Activated CD4-positive, alpha-beta T cell treated with anti-CD3 and anti-CD28 coated beads for 36 hours (primary cell): ENCODE measurements at regions of chr21 and their contacts with region 1.

Region 1: DNA sequence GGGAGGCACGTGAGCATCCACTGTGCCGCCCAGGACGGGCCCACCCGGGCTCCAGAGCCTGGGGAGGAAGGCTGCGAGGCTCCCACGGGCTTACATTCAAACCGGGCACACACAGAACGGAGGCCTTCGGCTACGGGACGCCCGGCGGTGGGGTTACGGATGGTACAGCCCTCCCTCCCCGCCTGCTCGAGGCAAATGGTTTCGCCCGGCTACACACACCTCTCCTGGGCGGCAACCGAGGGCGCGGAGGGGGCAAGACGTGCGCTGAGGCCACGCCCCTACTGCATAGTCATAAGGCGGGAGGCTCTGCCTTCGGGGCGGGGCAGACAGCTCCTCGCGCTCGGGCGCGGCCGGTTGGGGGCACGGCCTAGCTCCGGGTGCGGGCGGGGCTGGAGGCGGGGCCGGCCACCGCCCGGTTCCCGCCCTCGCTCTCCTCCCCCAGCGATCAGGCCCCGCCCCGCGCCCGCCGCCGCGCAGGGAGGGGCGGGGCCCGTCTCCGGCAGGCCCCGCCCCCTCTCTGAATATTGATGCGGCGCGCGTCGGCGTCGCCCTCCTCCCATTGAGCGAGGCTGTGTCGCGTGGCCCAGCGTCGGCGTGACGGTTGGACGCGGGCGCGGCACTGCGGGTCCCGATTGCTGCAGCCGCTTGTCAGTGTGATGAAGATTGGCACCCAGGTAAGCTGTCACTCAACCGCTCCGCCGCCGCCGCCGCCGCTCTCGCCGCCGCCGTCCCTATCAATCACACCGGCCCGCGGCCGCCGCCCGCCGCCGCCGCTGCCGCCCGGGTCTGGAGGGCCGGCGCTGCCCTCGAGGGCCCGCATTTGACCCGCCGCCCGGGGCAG is at the start of gene PKNOX1:
- DNase-seq: peak; percentile 100
- ATAC-seq: peak; percentile 89
- H3K4me3 Mint-ChIP-seq: peak within 1 kb of the TSS; percentile 85
- H3K27ac Mint-ChIP-seq: peak within 1 kb of the TSS; percentile 94
- H3K4me1 Mint-ChIP-seq: peaks cover 30% of the 10 kb centered on the region
- H3K27me3 Mint-ChIP-seq: no peaks in the 10 kb centered on the region
- total RNA-seq, gene PKNOX1: 13.4 to 14.8 TPM

Region 2: GRCh38 chr21:41361786-41362604 is 1612.2 kb before region 1 on chr21 and contains the start of gene MX2:
- CTCF ChIA-PET with region 1: no interaction called
- POLR2A ChIA-PET with region 1: no interaction called
- intact Hi-C with region 1: loop called in 1 of 2 experiments (anchors 5 kb)
- DNase-seq: peak; percentile 87
- ATAC-seq: peak; percentile 79
- H3K4me3 Mint-ChIP-seq: peak within 1 kb of the TSS; percentile 77
- H3K27ac Mint-ChIP-seq: peak within 1 kb of the TSS; percentile 97
- H3K4me1 Mint-ChIP-seq: peaks cover 56% of the 10 kb centered on the region
- H3K27me3 Mint-ChIP-seq: no peaks in the 10 kb centered on the region
- total RNA-seq, gene MX2: 30.7 to 40.4 TPM

Region 3: GRCh38 chr21:42878993-42879787 is 95.0 kb before region 1 on chr21 and contains the start of gene WDR4:
- CTCF ChIA-PET with region 1: no interaction called
- POLR2A ChIA-PET with region 1: interaction called, 3 read pairs
- intact Hi-C with region 1: loop called in 1 of 2 experiments (anchors 1 kb)
- DNase-seq: peak; percentile 99
- ATAC-seq: peak; percentile 93
- H3K4me3 Mint-ChIP-seq: peak within 1 kb of the TSS; percentile 92
- H3K27ac Mint-ChIP-seq: peak within 1 kb of the TSS; percentile 99
- H3K4me1 Mint-ChIP-seq: peaks cover 17% of the 10 kb centered on the region
- H3K27me3 Mint-ChIP-seq: no peaks in the 10 kb centered on the region
- total RNA-seq, gene WDR4: 34.0 to 46.5 TPM

Region 4: DNA sequence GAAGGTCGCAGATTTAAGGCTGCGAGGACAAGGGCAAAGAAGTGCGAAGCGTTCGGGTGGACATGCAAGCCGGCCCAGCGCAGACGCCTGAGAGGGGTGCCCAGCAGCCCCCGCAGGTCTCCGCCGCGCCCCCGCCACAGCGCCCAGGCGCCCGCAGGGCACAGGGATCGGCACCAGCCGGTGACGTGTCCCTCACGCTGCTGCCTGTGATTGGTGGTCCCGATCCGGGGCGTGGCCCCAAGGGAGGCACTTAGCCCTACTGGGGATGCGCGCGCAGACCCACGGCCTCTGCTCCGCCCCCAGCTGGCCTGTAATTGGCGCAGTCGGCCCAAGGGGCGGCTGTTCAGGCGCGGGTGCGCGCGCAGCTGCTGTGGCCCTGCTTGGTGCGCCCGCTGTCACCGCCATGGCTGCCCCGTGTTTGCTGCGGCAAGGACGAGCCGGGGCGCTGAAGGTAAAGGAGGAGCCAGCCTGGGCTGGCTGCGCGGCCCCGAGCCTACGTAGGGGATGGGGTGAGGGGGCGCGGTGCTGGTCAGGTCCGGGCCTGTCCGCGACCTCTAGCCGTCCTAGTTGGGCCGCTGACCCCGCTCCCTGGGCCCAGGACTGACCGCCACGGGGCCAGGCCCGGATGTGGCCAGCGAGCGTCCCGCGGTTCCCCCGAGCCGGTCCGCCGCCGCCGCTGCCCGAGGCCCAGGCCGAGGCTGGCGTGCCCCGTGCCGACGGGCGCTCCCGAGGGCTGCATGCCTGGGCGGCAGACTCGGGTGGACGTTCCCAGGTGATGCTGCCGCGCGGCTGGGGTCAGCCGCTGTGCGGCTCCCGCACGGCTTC is 81.1 kb before region 1 on chr21 and contains the start of gene NDUFV3:
- CTCF ChIA-PET with region 1: no interaction called
- POLR2A ChIA-PET with region 1: interaction called, 4 read pairs
- intact Hi-C with region 1: loop called (anchors 1 kb)
- DNase-seq: peak; percentile 100
- ATAC-seq: peak; percentile 97
- H3K4me3 Mint-ChIP-seq: peak within 1 kb of the TSS; percentile 74
- H3K27ac Mint-ChIP-seq: peak within 1 kb of the TSS; percentile 90
- H3K4me1 Mint-ChIP-seq: peaks cover 13% of the 10 kb centered on the region
- H3K27me3 Mint-ChIP-seq: no peaks in the 10 kb centered on the region
- total RNA-seq, gene NDUFV3: 24.6 to 31.8 TPM

Region 5: GRCh38 chr21:42923541-42924432 is 50.4 kb before region 1 on chr21:
- CTCF ChIA-PET with region 1: interaction called, 3 read pairs
- POLR2A ChIA-PET with region 1: no interaction called
- intact Hi-C with region 1: loop called (anchors 1 to 5 kb)
- DNase-seq: peak; percentile 87
- ATAC-seq: peak; percentile 99
- H3K4me3 Mint-ChIP-seq: peak overlapping the region; percentile 52
- H3K27ac Mint-ChIP-seq: peak overlapping the region; percentile 79
- H3K4me1 Mint-ChIP-seq: peaks cover 24% of the 10 kb centered on the region
- H3K27me3 Mint-ChIP-seq: no peaks in the 10 kb centered on the region

Region 6: DNA sequence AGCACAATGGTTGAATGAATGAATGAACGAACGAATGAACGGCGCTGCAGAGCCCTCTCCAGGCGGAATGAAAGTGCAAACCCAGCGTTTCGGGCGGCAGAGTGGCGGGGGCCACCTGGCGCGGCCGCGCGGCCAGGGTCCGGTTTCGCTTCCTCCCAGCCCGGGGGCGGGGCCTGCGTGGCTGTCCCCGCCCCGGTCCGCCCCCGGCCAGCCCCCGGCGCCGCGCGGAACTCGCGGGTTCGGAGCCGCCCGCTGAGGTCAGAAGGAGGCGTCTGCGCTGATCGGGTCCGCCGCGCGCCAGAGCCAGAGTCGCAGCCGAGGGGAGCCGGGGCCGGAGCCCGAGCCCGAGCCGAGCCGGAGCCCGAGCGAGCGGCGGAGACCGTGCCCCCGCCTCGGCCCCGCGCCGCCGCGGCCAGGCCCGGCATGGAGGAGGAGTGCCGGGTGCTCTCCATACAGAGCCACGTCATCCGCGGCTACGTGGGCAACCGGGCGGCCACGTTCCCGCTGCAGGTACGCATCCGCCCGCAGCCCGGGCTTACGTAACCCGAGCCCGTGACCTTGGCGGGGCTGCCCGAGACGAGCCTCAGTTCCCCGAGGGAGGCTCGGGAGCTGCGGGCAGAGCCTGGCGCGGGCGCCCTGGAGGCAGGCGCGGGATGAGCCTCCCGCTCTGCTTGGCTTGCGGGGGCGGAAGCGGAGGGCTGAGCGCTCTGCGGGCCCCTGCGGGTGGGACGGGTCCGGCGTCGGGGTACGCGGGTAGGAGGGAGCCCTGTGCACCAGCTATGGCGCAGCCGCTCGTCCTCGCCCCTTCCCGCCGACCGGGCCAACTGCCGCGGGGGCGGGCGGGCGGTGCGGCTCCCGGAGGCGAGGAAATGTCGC is 744.9 kb after region 1 on chr21 and contains the start of gene PDXK:
- CTCF ChIA-PET with region 1: no interaction called
- POLR2A ChIA-PET with region 1: no interaction called
- intact Hi-C with region 1: loop called in 1 of 2 experiments (anchors 1 kb)
- DNase-seq: peak; percentile 86
- ATAC-seq: peak; percentile 82
- H3K4me3 Mint-ChIP-seq: peak within 1 kb of the TSS; percentile 82
- H3K27ac Mint-ChIP-seq: peak within 1 kb of the TSS; percentile 74
- H3K4me1 Mint-ChIP-seq: peaks cover 27% of the 10 kb centered on the region
- H3K27me3 Mint-ChIP-seq: no peaks in the 10 kb centered on the region
- total RNA-seq, gene PDXK: 96.9 to 117 TPM